Ovary (tissue), 10 donors: ENCODE measurements at regions of chr5 and their contacts with region 1.

Region 1: DNA sequence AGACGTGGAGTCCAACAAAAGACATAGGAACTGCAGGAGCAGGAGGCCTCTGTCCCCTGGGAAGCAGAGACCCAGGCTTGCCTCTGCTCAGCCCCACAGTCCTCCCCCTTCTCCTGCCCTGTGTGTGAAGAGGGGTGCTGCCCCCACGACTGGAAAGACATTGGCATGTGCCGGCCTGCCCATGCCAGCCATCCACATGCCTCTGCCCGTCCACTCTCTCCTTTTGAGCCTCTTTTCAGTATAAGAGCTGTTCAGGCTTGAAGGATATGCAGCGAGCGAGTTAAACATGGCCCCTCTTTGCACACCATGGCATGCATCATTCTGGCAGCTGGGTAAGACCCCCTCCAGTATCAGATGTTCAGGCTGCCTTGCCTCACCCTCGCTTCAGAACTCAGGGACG is 159.7 kb upstream of the OTULINL start:
- DNase-seq: no peak
- H3K4me3 ChIP-seq: no peak overlapping the region
- H3K27ac ChIP-seq: no peak overlapping the region
- H3K4me1 ChIP-seq: peaks cover 12% of the 10 kb centered on the region
- H3K27me3 ChIP-seq: no peaks in the 10 kb centered on the region
- CTCF ChIP-seq: no peak
- EP300 ChIP-seq: no peak
- POLR2A ChIP-seq: no peak

Region 2: GRCh38 chr5:14489642-14490041 is 67.8 kb after region 1 on chr5:
- intact Hi-C with region 1: loop called in 1 of 4 experiments (anchors 2 kb)
- DNase-seq: no peak
- H3K4me3 ChIP-seq: no peak overlapping the region
- H3K27ac ChIP-seq: no peak overlapping the region
- H3K4me1 ChIP-seq: no peaks in the 10 kb centered on the region
- H3K27me3 ChIP-seq: no peaks in the 10 kb centered on the region
- CTCF ChIP-seq: no peak
- EP300 ChIP-seq: no peak
- POLR2A ChIP-seq: no peak